ENCODE measurements at regions of chr4 and their contacts with region 1.

Region 1: GRCh38 chr4:153204247-153205027 is at the start of gene TRIM2:
- DNase-seq: peak in 1 of 2 experiments; percentile 72
- H3K4me3 ChIP-seq: peak within 1 kb of the TSS; percentile 45 to 58 (median 50)
- H3K27ac ChIP-seq: no peak within 1 kb of the TSS
- H3K4me1 ChIP-seq: peaks cover 9 to 33% (median 24%) of the 10 kb centered on the region in 4 experiments
- H3K27me3 ChIP-seq: no peaks in the 10 kb centered on the region; a peak in 1 of 7 replicates
- CTCF ChIP-seq: no peak
- EP300 ChIP-seq: no peak
- POLR2A ChIP-seq: peak in 1 of 2 experiments; percentile 41; a peak in 1 of 3 replicates
- RAD21 ChIP-seq: no peak
- total RNA-seq, gene TRIM2: 58.1 and 59.8 TPM in 2 replicates

Region 2: DNA sequence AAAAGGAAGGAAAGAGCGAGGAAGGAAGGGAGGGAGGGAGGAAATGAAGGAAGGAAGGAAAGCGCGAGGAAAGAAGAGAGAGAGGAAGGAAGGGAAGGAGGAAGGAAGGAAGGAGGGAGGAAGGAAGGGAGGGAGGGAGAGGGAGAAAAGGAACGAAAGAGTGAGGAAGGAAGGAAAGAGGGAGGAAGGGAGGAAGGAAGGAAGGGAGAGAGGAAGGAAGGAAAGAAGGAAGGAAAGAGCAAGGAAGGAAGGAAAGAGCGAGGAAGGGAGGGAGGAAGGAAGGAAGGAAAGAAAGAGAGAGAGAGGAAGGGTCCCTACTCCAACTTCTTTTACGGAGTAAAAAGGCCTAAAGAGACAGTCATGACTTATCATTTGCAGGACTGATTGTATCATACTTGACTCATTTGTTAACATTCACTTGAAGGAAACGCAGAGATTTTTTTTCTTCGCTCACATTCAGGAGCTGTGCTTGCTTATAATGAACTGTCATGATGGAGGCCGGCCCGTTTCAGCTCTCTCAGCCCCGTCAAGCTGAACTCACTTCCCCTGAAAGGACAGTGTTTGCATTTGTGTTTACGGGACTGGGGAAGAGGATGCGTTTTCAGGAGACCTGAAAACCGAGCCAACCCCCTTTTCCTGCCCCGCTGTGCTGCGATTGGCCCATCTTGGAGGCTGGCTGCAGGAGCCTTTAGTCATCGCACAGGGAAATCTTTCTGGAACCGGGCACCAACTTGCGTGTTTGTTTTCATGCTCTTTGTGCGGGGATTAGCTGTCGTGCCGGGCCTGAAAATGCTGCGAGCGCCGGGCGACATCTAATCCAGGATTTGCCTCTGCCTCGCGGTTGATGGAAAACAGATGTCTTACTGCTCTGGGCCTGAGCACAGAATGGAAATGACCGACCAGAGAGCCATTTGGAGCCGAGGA is 17.6 kb after region 1 on chr4:
- CTCF ChIA-PET with region 1: interaction called, 25 read pairs
- POLR2A ChIA-PET with region 1: interaction called, 6 read pairs
- DNase-seq: peak in 1 of 2 experiments; percentile 65
- H3K4me3 ChIP-seq: peak overlapping the region; percentile 49 to 68 (median 60)
- H3K27ac ChIP-seq: no peak overlapping the region
- H3K4me1 ChIP-seq: no peaks in the 10 kb centered on the region; a peak in 1 of 7 replicates
- H3K27me3 ChIP-seq: peaks cover 0 to 10% (median 4%) of the 10 kb centered on the region in 4 experiments; a peak in 3 of 7 replicates
- CTCF ChIP-seq: no peak
- EP300 ChIP-seq: no peak
- POLR2A ChIP-seq: no peak; a peak in 1 of 3 replicates
- RAD21 ChIP-seq: no peak

Region 3: DNA sequence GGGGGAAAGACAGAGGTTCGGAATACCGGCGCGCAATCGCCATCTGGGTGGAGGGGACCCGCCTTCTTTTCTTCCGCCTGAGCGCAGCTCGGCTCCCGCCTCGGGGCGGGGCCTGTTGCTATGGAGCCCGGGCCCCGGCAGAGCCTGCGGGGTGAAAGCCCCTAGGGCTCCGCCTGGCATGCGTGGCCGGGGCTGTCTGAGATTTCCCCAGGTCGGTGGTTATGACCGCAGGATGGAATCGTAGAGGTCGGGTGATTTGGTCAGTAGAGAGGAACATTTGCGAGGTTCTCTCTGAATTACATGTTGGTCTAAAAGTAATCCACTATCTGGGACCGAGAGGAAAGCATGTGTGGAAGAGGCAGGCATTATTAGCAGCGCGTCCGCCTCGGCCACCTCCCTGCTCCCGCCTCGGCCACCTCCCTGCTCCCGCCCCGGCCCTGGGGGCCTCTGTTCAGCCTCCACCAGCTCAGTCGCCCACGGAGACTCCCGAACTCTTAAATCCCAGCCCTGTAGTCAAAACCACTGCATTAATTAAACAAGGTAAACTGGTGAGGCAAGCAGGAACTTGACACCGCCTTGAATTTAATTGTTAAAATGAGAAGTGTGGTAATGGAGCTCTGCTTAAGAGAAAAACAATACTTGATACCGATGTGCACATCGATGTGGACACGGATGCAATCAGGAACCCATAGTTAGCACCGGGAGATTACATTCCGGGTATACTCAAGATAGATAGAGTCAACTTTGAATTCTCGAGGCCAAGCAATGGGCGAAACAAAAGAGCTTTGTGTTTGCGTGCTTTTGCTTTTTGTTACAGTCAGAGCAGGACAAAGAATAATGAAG is 45.0 kb after region 1 on chr4:
- CTCF ChIA-PET with region 1: interaction called, 13 read pairs
- POLR2A ChIA-PET with region 1: interaction called, 5 read pairs
- DNase-seq: peak; percentile 58 to 91
- H3K4me3 ChIP-seq: peak overlapping the region; percentile 58 to 73 (median 70)
- H3K27ac ChIP-seq: peak overlapping the region; percentile 55
- H3K4me1 ChIP-seq: peaks cover 7 to 14% (median 10%) of the 10 kb centered on the region in 4 experiments
- H3K27me3 ChIP-seq: no peaks in the 10 kb centered on the region
- CTCF ChIP-seq: no peak
- EP300 ChIP-seq: no peak
- POLR2A ChIP-seq: peak in 1 of 2 experiments; percentile 30; a peak in 2 of 3 replicates
- RAD21 ChIP-seq: no peak

Measured in H1 (cell line).